ENCODE measurements at regions of chr2 and their contacts with region 1.

Region 1: DNA sequence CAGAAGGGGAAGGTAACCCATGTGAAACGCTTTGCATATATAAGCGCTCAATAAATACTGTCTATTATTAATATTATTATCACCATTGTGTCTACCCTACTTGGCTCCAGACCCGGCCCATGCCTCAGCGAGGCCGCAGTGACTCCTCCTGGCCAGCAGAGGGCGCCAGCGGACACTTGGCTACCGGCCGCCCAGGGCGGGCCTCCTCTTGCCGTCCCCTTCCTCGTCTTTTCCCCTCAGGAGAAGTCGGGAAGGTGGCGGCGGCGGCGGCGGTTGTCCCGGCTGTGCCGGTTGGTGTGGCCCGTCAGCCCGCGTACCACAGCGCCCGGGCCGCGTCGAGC is at the start of gene AGFG1:
- DNase-seq: peak; percentile 84 to 95 (median 85)
- ATAC-seq: peak; percentile 85 to 94 (median 93)
- H3K4me3 ChIP-seq: peak within 1 kb of the TSS; percentile 69 to 99 (median 90)
- H3K27ac ChIP-seq: peak within 1 kb of the TSS in 11 of 12 donors; percentile 61 to 91 (median 88)
- H3K4me1 ChIP-seq: peaks cover 0 to 48% (median 26%) of the 10 kb centered on the region in 12 donors
- H3K27me3 ChIP-seq: no peaks in the 10 kb centered on the region
- CTCF ChIP-seq: peak; percentile 96 to 100 (median 99)
- POLR2A ChIP-seq: peak in 1 of 2 donors; percentile 65
- total RNA-seq, gene AGFG1: 48.4 to 92.1 (median 60.0) TPM

Region 2: DNA sequence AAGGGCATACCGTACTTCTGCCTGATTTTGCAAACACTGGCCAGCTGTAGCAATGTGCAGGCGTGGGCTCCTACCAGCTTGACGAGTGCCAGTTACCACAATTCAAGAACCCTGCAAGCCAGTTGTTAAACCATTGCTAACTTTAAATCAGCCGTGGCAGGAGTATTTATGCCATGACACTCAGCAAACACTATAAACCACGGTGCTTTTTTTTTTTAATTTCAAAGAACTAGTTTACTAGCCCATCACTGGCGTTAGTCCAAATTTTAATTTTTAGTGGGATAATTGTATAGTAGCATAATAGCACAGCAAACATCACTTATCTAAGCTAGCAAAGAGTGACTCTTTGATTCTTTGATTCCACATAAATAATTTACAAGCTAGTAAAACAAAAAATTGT is 419.0 kb before region 1 on chr2:
- intact Hi-C with region 1: no loop called
- DNase-seq: no peak
- ATAC-seq: no peak
- H3K4me3 ChIP-seq: no peak overlapping the region
- H3K27ac ChIP-seq: no peak overlapping the region
- H3K4me1 ChIP-seq: no peaks in the 10 kb centered on the region
- H3K27me3 ChIP-seq: no peaks in the 10 kb centered on the region
- CTCF ChIP-seq: no peak
- POLR2A ChIP-seq: no peak

Region 3: DNA sequence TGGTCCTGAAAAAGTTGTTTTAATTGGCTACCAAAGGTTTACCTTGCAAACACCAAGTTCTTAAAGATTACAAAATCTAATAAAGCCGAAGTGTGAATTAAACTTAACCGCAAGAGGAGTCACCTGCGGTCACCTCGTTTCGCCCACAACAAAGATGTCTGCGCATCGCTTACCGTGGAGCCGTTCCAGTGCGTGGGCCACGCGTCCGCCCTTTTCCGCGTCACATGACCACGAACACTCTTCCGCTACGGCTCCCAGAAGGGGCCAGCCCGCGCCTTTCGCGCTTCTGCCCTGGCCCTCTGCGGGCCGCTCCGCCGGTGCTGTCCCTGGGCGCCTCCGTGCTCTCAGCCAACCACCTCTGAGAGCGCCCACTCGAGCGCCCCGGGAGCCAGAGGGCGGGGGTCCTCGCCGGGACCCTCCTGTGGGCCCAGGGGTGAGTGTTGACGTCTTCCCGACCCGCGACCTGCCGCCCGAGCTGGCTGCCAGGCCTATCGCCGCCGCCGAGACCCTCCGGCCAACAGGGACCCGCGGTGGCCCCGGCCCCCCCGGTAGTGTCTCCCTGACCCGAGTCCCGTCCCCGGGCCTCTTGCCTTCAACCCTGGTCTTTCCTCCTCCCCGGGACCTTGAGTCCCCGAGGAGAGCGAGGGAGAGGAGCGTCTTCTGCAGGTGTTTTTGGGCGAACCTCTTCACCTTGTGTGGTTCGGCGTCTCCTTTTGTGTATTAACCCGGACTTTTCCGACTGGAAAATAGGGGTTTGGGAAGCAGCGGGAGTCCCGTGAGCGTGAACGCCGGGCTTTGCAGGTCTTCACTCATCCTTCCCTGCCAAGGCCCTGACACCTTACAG is 146.7 kb before region 1 on chr2 and contains the start of gene MFF:
- intact Hi-C with region 1: loop called in 2 of 10 experiments (anchors 5 to 10 kb)
- DNase-seq: peak; percentile 95
- ATAC-seq: peak; percentile 99 to 100 (median 100)
- H3K4me3 ChIP-seq: peak within 1 kb of the TSS; percentile 61 to 100 (median 94)
- H3K27ac ChIP-seq: peak within 1 kb of the TSS; percentile 70 to 97 (median 92)
- H3K4me1 ChIP-seq: peaks cover 0 to 25% (median 18%) of the 10 kb centered on the region in 12 donors
- H3K27me3 ChIP-seq: no peaks in the 10 kb centered on the region
- CTCF ChIP-seq: peak in 6 of 12 donors; percentile 4 to 34 (median 22)
- POLR2A ChIP-seq: peak in 1 of 2 donors; percentile 69
- total RNA-seq, gene MFF: 62.7 to 117 (median 79.7) TPM

Region 4: GRCh38 chr2:227363756-227364155 is 108.1 kb before region 1 on chr2:
- intact Hi-C with region 1: no loop called
- DNase-seq: no peak
- ATAC-seq: no peak
- H3K4me3 ChIP-seq: no peak overlapping the region
- H3K27ac ChIP-seq: no peak overlapping the region
- H3K4me1 ChIP-seq: peaks cover 0 to 12% (median 0%) of the 10 kb centered on the region in 12 donors
- H3K27me3 ChIP-seq: no peaks in the 10 kb centered on the region
- CTCF ChIP-seq: peak in 1 of 12 donors; percentile 31
- POLR2A ChIP-seq: no peak

Region 5: GRCh38 chr2:227411320-227411989 is 60.4 kb before region 1 on chr2:
- intact Hi-C with region 1: loop called in 8 of 10 experiments (anchors 2 to 5 kb)
- DNase-seq: no peak
- ATAC-seq: no peak
- H3K4me3 ChIP-seq: no peak overlapping the region
- H3K27ac ChIP-seq: no peak overlapping the region
- H3K4me1 ChIP-seq: peaks cover 0 to 65% (median 8%) of the 10 kb centered on the region in 12 donors
- H3K27me3 ChIP-seq: no peaks in the 10 kb centered on the region
- CTCF ChIP-seq: no peak
- POLR2A ChIP-seq: no peak

Region 6: GRCh38 chr2:227423656-227424499 is 48.0 kb before region 1 on chr2:
- intact Hi-C with region 1: no loop called
- DNase-seq: no peak
- ATAC-seq: no peak
- H3K4me3 ChIP-seq: no peak overlapping the region
- H3K27ac ChIP-seq: no peak overlapping the region
- H3K4me1 ChIP-seq: no peaks in the 10 kb centered on the region
- H3K27me3 ChIP-seq: no peaks in the 10 kb centered on the region
- CTCF ChIP-seq: no peak
- POLR2A ChIP-seq: no peak

Region 7: DNA sequence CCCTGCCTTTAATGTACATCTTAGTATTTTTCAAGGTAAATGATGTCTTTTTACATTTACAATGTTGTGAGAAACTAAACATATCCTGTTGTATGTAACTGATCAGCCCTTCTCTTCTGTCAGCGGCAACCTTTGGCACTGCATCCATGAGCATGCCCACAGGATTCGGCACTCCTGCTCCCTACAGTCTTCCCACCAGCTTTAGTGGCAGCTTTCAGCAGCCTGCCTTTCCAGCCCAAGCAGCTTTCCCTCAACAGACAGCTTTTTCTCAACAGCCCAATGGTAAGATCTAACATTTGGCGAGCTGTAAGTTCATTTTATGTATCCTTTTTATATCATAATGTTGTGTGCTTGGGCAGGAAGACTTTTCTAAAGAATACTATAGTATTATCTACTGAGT is 79.9 kb after region 1 on chr2:
- intact Hi-C with region 1: loop called in 1 of 10 experiments (anchors 10 kb)
- DNase-seq: no peak
- ATAC-seq: no peak
- H3K4me3 ChIP-seq: no peak overlapping the region
- H3K27ac ChIP-seq: no peak overlapping the region
- H3K4me1 ChIP-seq: no peaks in the 10 kb centered on the region
- H3K27me3 ChIP-seq: no peaks in the 10 kb centered on the region
- CTCF ChIP-seq: no peak
- POLR2A ChIP-seq: no peak

Region 8: DNA sequence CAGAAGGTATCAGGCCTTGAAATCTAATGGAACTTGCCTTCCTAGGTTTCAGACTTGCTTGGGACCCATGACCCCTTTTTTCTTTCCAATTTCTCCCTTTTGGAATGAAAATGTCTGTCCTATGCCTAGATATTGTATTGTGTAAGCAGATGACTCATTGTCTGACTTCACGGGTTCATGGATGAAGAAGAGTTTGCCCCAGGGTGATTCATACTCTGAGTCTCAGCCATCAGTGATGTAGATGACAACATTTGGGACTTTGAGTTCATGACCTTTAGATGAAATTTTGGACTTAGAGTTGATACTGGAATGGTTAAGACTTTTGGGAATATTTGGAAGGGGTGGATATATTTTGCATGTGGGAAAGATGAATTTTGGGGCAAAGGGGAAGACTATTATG is 183.6 kb after region 1 on chr2:
- intact Hi-C with region 1: loop called in 3 of 10 experiments (anchors 10 kb)
- DNase-seq: no peak
- ATAC-seq: peak in 3 of 4 donors; percentile 67 to 91 (median 85)
- H3K4me3 ChIP-seq: no peak overlapping the region
- H3K27ac ChIP-seq: peak overlapping the region in 2 of 12 donors; percentile 20 to 49
- H3K4me1 ChIP-seq: peaks cover 0 to 6% (median 0%) of the 10 kb centered on the region in 12 donors
- H3K27me3 ChIP-seq: no peaks in the 10 kb centered on the region
- CTCF ChIP-seq: no peak
- POLR2A ChIP-seq: no peak

Region 9: DNA sequence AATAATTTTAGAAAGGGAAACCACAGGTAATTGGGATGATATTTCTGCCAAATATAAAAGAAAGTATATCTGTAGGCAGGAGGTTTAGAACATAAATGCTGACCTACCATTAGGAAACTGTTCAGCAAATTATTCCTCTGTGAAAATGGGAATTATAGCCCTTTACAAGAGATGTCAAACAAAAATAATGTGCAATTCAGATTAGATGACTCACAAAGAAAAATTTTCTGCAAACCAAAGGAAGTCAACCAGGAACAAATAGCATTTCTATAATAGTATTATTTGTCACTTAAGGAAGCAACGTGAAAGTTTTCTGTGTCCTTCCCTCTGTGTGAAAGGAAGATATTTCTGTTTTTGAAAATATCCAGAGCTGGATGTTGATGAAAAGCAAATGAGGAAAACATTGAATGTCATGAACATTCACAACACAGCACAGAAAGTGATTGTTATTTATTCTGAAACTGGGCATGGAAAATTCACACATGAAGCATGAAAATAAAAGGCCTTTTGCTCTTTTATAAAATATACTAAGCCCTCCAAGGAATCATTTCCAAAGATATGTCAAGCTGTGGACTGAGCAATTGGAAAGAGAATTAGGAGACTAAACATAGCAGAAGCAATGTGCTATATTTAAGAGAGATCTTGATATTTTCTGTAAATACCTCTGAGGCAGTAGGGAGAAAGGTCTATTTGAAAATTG is 767.5 kb after region 1 on chr2:
- intact Hi-C with region 1: no loop called
- DNase-seq: no peak
- ATAC-seq: no peak
- H3K4me3 ChIP-seq: no peak overlapping the region
- H3K27ac ChIP-seq: no peak overlapping the region
- H3K4me1 ChIP-seq: no peaks in the 10 kb centered on the region
- H3K27me3 ChIP-seq: no peaks in the 10 kb centered on the region
- CTCF ChIP-seq: no peak
- POLR2A ChIP-seq: no peak